HepG2 (cell line): ENCODE measurements at regions of chr19 and their contacts with region 1.

Region 1: GRCh38 chr19:17266975-17267788 is at the start of gene BABAM1:
- DNase-seq: peak; percentile 99
- ATAC-seq: peak; percentile 96
- H3K4me3 ChIP-seq: peak within 1 kb of the TSS; percentile 92 to 100 (median 98)
- H3K27ac ChIP-seq: peak within 1 kb of the TSS; percentile 75
- H3K4me1 ChIP-seq: peaks cover 38% of the 10 kb centered on the region
- H3K27me3 ChIP-seq: peaks cover 0 to 6% of the 10 kb centered on the region in 2 experiments; a peak in 2 of 5 replicates
- CTCF ChIP-seq: no peak
- EP300 ChIP-seq: peak in 1 of 2 experiments; percentile 35; a peak in 1 of 4 replicates
- POLR2A ChIP-seq: peak; percentile 65 to 82
- RAD21 ChIP-seq: no peak
- total RNA-seq, gene BABAM1: 62.2 and 70.0 TPM in 2 replicates

Region 2: DNA sequence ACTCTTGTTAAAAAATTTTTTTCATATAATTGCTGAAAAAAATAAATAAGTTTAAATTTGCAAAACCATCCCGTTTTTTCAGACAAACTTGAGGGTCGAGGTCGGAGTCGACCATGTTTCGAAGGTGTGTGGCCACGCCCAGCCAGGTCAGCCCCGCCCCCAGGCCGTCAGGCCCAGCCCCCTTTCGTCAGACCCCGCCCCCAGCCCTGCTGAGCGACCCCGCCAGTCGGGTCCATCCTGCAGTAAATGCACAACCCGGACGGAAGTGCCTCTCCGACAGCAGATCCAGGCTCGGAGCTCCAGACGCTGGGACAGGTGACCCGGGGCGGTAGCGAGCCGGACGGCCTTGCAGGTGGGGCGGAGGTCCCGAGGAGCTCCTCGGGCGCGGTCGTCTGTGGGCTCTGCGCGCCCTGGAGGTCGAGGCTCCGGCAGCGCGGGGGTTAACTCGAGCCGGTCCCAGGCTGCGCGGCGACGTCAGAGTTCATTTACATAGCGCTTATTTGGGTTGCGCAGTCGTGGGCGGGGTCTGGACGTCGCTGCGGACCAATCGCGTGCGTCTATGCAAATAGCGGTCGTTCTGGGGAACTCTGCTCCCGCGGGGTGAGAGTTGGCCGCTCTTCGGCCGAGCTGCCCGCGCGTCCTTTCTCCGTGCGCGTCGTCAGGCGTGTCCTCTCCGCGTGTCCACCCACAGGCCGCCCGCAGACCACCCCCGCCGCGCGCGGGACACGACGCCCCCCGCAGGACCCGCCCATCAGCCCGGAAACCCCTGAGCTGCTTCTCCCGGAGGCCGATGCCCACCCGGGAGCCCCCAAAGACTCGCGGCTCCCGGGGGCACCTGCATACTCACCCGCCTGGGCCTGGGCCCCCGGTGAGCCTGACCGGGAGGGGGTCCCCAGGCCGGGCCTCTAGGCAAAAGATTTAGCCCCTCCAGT is 40.9 kb before region 1 on chr19 and contains the start of gene OCEL1:
- CTCF ChIA-PET with region 1: no interaction called
- POLR2A ChIA-PET with region 1: interaction called, 24 read pairs
- in situ Hi-C with region 1: no loop called
- intact Hi-C with region 1: loop called (anchors 5 kb)
- DNase-seq: peak; percentile 95
- ATAC-seq: peak; percentile 92
- H3K4me3 ChIP-seq: peak within 1 kb of the TSS; percentile 68 to 80 (median 79)
- H3K27ac ChIP-seq: peak within 1 kb of the TSS; percentile 94
- H3K4me1 ChIP-seq: peaks cover 23% of the 10 kb centered on the region
- H3K27me3 ChIP-seq: no peaks in the 10 kb centered on the region; a peak in 1 of 5 replicates
- CTCF ChIP-seq: peak; percentile 17; the same call in 1 of the 2 replicates
- EP300 ChIP-seq: no peak
- POLR2A ChIP-seq: peak; percentile 93 to 97
- RAD21 ChIP-seq: peak; percentile 38; the same call in 1 of the 2 replicates
- total RNA-seq, gene OCEL1: 10.6 and 13.6 TPM in 2 replicates

Region 3: DNA sequence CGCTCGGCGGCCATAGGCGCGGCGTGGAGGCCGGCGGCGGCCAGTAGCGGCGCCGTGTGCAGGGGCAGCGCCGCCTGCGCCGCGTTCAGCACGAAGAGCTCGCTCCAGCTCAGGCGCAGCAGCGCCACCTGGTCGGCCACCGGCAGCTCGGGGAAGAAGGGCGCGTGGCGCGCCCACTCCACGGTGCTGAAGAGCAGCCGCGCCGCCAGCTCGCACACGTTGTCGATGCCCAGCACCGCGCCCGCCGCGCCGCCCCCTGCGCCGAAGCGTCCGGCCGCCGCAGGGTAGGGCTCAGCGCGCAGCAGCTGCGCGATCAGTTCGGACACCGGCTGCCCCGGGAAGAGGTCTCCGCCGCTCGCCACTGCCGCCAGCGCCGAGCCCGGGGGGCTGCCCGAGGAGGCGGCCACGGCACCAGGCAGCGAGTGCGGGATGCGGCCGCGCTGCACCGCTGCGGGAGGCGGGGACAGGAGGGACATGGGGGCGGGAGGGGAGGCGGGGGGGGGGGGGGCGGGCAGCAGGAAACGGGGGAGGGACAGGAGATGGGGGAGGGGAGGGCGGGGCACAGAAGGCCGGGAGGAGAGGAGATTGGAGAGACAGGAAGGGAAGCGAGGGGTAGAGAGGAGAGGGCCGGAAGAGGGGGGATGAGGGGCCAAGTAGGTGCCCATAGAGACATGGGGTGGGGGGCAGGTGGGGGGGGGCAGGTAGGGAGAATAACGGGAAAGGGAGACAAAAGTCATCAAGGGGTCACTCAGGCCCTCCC is 31.4 kb before region 1 on chr19:
- CTCF ChIA-PET with region 1: no interaction called
- POLR2A ChIA-PET with region 1: interaction called, 14 read pairs
- in situ Hi-C with region 1: no loop called
- intact Hi-C with region 1: no loop called
- DNase-seq: no peak
- ATAC-seq: no peak
- H3K4me3 ChIP-seq: no peak overlapping the region
- H3K27ac ChIP-seq: no peak overlapping the region
- H3K4me1 ChIP-seq: peaks cover 42% of the 10 kb centered on the region
- H3K27me3 ChIP-seq: no peaks in the 10 kb centered on the region
- CTCF ChIP-seq: no peak
- EP300 ChIP-seq: no peak
- POLR2A ChIP-seq: no peak
- RAD21 ChIP-seq: no peak

Region 4: GRCh38 chr19:17245244-17245984 is 21.8 kb before region 1 on chr19 and contains the start of gene NR2F6:
- CTCF ChIA-PET with region 1: no interaction called
- POLR2A ChIA-PET with region 1: interaction called, 21 read pairs
- in situ Hi-C with region 1: no loop called
- intact Hi-C with region 1: no loop called
- DNase-seq: no peak
- ATAC-seq: no peak
- H3K4me3 ChIP-seq: peak within 1 kb of the TSS; percentile 87 to 92 (median 89)
- H3K27ac ChIP-seq: peak within 1 kb of the TSS; percentile 95
- H3K4me1 ChIP-seq: peaks cover 73% of the 10 kb centered on the region
- H3K27me3 ChIP-seq: no peaks in the 10 kb centered on the region
- CTCF ChIP-seq: no peak
- EP300 ChIP-seq: no peak
- POLR2A ChIP-seq: peak in 1 of 2 experiments; percentile 73; a peak in 3 of 4 replicates
- RAD21 ChIP-seq: peak; percentile 19; the same call in 1 of the 2 replicates
- total RNA-seq, gene NR2F6: 54.1 and 72.4 TPM in 2 replicates

Region 5: DNA sequence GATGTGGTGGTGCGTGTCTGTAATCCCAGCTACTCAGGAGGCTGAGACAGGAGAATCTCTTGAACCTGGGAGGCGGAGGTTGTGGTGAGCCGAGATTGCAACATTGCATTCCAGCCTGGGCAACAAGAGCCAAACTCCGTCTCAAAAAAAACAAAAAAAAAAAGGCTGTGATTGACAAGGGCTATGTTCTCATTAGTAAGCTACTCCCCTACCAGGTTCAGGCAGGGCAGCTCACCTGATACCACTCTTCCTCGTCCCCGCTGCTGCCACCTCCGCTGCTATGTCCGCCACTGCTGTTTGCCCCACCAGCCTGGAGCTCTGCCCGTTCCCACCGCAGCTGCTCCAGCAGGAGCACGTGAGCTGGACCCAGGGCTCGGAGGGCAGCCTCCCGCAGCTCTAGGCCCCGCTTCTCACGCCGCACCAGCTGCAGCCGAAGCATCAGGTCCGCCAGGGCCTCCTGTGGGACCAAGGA is 12.0 kb before region 1 on chr19:
- CTCF ChIA-PET with region 1: no interaction called
- POLR2A ChIA-PET with region 1: interaction called, 20 read pairs
- in situ Hi-C with region 1: no loop called
- intact Hi-C with region 1: no loop called
- DNase-seq: peak; percentile 75
- ATAC-seq: peak; percentile 92
- H3K4me3 ChIP-seq: peak overlapping the region in 1 of 3 experiments; percentile 54; a peak in 2 of 6 replicates
- H3K27ac ChIP-seq: peak overlapping the region; percentile 24
- H3K4me1 ChIP-seq: peaks cover 33% of the 10 kb centered on the region
- H3K27me3 ChIP-seq: no peaks in the 10 kb centered on the region
- CTCF ChIP-seq: no peak; the same call in 1 of the 2 replicates
- EP300 ChIP-seq: no peak
- POLR2A ChIP-seq: no peak
- RAD21 ChIP-seq: no peak

Region 6: GRCh38 chr19:17305517-17306284 is 38.5 kb after region 1 on chr19 and contains the start of gene MRPL34:
- CTCF ChIA-PET with region 1: no interaction called
- POLR2A ChIA-PET with region 1: interaction called, 13 read pairs
- in situ Hi-C with region 1: no loop called
- intact Hi-C with region 1: loop called (anchors 1 kb)
- DNase-seq: peak; percentile 99
- ATAC-seq: peak; percentile 70
- H3K4me3 ChIP-seq: peak within 1 kb of the TSS; percentile 60 to 87 (median 85)
- H3K27ac ChIP-seq: peak within 1 kb of the TSS; percentile 91
- H3K4me1 ChIP-seq: peaks cover 40% of the 10 kb centered on the region
- H3K27me3 ChIP-seq: no peaks in the 10 kb centered on the region; a peak in 1 of 5 replicates
- CTCF ChIP-seq: peak; percentile 96
- EP300 ChIP-seq: no peak
- POLR2A ChIP-seq: peak; percentile 61 to 76; a peak in 3 of 4 replicates
- RAD21 ChIP-seq: peak; percentile 89
- total RNA-seq, gene MRPL34: 77.3 and 93.6 TPM in 2 replicates